ENCODE measurements at regions of chr7 and their contacts with region 1.

Region 1: DNA sequence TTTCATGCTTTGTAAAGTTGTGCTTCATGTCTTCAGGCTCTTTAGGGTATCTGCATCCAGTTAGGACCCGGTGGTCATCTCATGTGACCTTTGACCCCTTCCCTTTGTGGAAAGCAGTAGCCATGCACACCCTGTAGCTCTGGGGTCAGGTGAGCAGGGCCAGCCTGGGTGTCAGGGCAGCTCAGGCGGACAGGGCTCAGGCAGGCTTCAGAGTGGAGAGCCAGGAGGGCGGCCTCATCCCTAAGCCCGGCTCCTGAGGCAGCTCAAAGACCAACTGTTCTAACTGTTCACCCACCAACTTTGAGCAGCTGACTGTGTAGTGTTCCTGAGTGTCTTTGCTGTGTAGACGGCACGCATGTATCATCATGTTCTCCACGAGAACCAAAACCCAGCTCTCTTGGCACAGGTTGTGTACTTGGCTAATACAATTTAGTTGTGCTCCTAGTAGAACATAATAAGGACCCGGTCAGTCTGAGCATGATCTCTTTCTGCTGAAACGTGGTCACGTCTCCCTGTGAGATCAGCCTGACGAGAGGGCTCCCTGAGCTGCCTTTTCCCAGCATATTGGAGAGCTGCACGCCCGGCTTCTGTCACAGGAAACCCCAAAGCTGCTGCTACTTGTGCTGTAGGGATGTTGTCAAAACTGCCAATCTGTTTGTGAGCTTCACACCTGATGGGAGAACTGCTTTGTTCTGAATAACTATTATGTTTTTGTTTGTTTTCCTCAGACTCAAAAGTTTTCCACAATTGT is 30.0 kb downstream of the EEPD1 start:
- DNase-seq: no peak
- H3K4me3 ChIP-seq: no peak overlapping the region
- CTCF ChIP-seq: no peak
- POLR2A ChIP-seq: no peak

Region 2: GRCh38 chr7:36280840-36281812 is 98.1 kb after region 1 on chr7:
- intact Hi-C with region 1: loop called (anchors 10 kb)
- DNase-seq: peak; percentile 80 to 95
- H3K4me3 ChIP-seq: no peak overlapping the region
- CTCF ChIP-seq: no peak
- POLR2A ChIP-seq: no peak